ENCODE measurements at regions of chr1 and their contacts with region 1.

Region 1: DNA sequence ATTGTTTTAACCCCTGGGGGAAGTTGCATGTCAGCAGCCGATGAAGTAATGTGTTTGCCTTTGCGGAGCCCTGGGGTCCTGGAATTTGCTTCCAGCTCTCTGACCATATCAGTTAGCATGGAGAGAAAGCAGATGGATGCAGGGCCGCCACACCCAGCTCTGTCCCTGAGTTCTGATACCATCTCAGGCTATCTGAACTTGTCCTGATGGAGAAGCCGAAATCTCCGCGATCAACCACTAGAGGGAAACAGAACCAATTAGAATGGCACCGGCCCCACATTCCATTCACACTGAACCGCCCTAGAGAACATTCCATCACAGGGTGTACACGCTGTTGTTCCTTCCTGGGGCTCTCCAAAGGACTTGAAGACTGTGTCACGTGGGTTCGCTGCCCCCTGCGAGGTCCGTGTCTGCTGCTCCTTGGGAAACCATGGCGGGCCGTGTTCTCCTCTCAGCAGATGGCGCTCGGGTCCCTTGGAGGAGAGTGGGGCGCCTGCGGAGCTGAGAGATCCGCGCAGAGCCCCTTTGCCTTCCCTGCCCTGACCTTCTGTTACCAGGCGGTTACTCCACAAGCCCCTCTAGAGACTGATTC is 75.4 kb downstream of the ABCA4 start:
- DNase-seq: peak; percentile 93 to 96
- ATAC-seq: peak; percentile 98 to 99
- H3K4me3 ChIP-seq: no peak overlapping the region
- H3K27ac ChIP-seq: peak overlapping the region; percentile 49 to 83
- H3K4me1 ChIP-seq: peaks cover 17% of the 10 kb centered on the region
- CTCF ChIP-seq: peak; percentile 92
- EP300 ChIP-seq: no peak
- POLR2A ChIP-seq: no peak
- RAD21 ChIP-seq: peak; percentile 81 to 95

Region 2: GRCh38 chr1:93672069-93672468 is 373.5 kb before region 1 on chr1:
- CTCF ChIA-PET with region 1: no interaction called
- POLR2A ChIA-PET with region 1: no interaction called
- DNase-seq: peak; percentile 24 to 83
- ATAC-seq: peak; percentile 48 to 72; a peak in 4 of 6 replicates
- H3K4me3 ChIP-seq: no peak overlapping the region; the same call in 1 of the 3 replicates
- H3K27ac ChIP-seq: peak overlapping the region; percentile 74 to 86
- H3K4me1 ChIP-seq: peaks cover 100% of the 10 kb centered on the region
- CTCF ChIP-seq: no peak
- EP300 ChIP-seq: peak in 1 of 2 experiments; percentile 50; a peak in 2 of 5 replicates
- POLR2A ChIP-seq: no peak
- RAD21 ChIP-seq: no peak

Region 3: DNA sequence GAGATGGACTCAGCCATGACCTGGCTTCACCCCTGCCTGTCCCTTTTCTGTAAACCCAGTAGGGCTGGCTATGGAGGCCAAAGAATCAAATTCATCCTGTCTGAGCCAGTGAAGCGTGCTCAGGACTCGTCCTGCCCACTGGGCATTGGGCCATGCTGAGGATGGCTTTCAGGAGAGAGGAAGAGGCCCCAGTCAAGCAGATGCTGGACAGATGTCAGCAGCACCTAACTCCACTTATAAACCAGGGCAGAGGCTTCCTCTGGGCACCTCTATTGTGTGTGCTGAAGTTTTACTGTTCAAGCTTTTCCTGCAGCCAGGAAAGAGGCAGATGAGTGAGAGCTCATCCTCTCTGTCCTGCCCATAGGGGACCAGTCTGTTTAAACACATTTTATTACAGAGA is 39.0 kb before region 1 on chr1:
- CTCF ChIA-PET with region 1: no interaction called
- POLR2A ChIA-PET with region 1: no interaction called
- DNase-seq: no peak
- ATAC-seq: no peak
- H3K4me3 ChIP-seq: no peak overlapping the region
- H3K27ac ChIP-seq: no peak overlapping the region
- H3K4me1 ChIP-seq: 0 out of 3 replicates have a peak, but pooled peaks cover 3% of the 10 kb centered on the region
- CTCF ChIP-seq: no peak
- EP300 ChIP-seq: no peak
- POLR2A ChIP-seq: no peak
- RAD21 ChIP-seq: no peak

Region 4: DNA sequence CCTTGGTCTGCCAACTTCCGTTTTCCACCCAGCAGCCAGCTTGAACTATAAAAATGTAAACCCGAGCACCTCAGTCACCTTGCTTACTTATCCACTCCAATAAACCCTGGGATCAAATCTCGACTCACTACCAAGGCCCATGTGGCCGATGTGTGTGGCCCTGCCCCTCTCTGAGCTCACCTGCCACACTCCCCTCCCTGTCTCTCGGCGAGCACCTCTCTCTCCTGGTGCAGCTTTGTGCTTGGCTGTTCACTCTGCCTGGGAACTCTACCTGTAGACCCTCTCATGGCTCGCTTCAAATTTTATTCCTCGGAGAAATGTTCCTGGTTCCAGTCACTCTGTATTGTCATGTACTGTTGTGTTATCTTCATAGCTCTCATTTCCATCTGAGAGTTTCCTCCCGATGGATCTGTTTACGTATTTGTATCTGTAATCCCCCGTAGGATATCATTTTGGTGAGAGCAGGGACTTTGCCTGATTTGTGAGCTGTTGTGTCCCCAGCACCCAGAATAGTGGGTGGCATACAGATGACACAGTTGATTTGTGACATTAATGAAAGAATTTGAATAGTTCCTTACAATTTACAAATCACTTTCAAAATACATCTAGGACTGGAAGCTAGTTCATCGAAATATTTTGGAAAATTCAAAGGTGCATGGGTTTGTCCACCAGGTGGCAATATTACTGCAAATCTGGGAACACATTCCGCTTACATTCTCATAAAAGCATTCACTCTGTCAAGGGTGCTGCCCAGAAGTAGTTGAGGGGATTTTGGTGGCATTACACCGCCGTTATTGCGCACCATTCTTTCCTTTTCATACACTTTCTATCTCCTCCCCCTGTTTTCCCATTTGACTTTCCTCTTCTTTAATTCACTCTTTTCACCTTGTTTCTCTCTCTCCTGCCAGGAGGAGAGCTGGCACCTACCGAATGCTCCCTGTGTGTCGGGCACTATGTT is 19.9 kb before region 1 on chr1:
- CTCF ChIA-PET with region 1: interaction called, 315 read pairs
- POLR2A ChIA-PET with region 1: no interaction called
- DNase-seq: peak; percentile 60 to 68
- ATAC-seq: peak; percentile 55 to 70; a peak in 3 of 6 replicates
- H3K4me3 ChIP-seq: no peak overlapping the region
- H3K27ac ChIP-seq: peak overlapping the region; percentile 46 to 64; a peak in 5 of 6 replicates
- H3K4me1 ChIP-seq: peaks cover 37% of the 10 kb centered on the region
- CTCF ChIP-seq: peak; percentile 77
- EP300 ChIP-seq: no peak
- POLR2A ChIP-seq: no peak
- RAD21 ChIP-seq: peak; percentile 68 to 78

Region 5: GRCh38 chr1:94055459-94056122 is 10.0 kb after region 1 on chr1:
- CTCF ChIA-PET with region 1: interaction called, 89 read pairs
- POLR2A ChIA-PET with region 1: interaction called, 3 read pairs
- DNase-seq: no peak
- ATAC-seq: no peak
- H3K4me3 ChIP-seq: no peak overlapping the region
- H3K27ac ChIP-seq: no peak overlapping the region
- H3K4me1 ChIP-seq: peaks cover 10% of the 10 kb centered on the region
- CTCF ChIP-seq: no peak
- EP300 ChIP-seq: no peak
- POLR2A ChIP-seq: no peak
- RAD21 ChIP-seq: no peak

Region 6: GRCh38 chr1:94061513-94062443 is 16.2 kb after region 1 on chr1:
- CTCF ChIA-PET with region 1: interaction called, 89 read pairs
- POLR2A ChIA-PET with region 1: interaction called, 3 read pairs
- DNase-seq: peak; percentile 67 to 87
- ATAC-seq: peak; percentile 93 to 97
- H3K4me3 ChIP-seq: no peak overlapping the region
- H3K27ac ChIP-seq: peak overlapping the region; percentile 72 to 78
- H3K4me1 ChIP-seq: peaks cover 21% of the 10 kb centered on the region
- CTCF ChIP-seq: peak; percentile 76
- EP300 ChIP-seq: no peak
- POLR2A ChIP-seq: no peak
- RAD21 ChIP-seq: peak; percentile 91 to 93

Region 7: GRCh38 chr1:94209425-94209824 is 163.9 kb after region 1 on chr1:
- CTCF ChIA-PET with region 1: interaction called, 10 read pairs
- POLR2A ChIA-PET with region 1: no interaction called
- DNase-seq: no peak
- ATAC-seq: no peak
- H3K4me3 ChIP-seq: no peak overlapping the region
- H3K27ac ChIP-seq: no peak overlapping the region
- H3K4me1 ChIP-seq: no peaks in the 10 kb centered on the region
- CTCF ChIP-seq: no peak
- EP300 ChIP-seq: no peak
- POLR2A ChIP-seq: no peak
- RAD21 ChIP-seq: no peak

Region 8: GRCh38 chr1:94329986-94330385 is 284.4 kb after region 1 on chr1:
- CTCF ChIA-PET with region 1: interaction called, 840 read pairs
- POLR2A ChIA-PET with region 1: interaction called, 3 read pairs
- DNase-seq: peak in 1 of 2 experiments; percentile 37
- ATAC-seq: peak; percentile 22 to 48; a peak in 3 of 6 replicates
- H3K4me3 ChIP-seq: no peak overlapping the region
- H3K27ac ChIP-seq: peak overlapping the region; percentile 39 to 68; a peak in 5 of 6 replicates
- H3K4me1 ChIP-seq: peaks cover 54% of the 10 kb centered on the region
- CTCF ChIP-seq: peak; percentile 43
- EP300 ChIP-seq: no peak
- POLR2A ChIP-seq: no peak
- RAD21 ChIP-seq: peak; percentile 70 to 73

Region 9: DNA sequence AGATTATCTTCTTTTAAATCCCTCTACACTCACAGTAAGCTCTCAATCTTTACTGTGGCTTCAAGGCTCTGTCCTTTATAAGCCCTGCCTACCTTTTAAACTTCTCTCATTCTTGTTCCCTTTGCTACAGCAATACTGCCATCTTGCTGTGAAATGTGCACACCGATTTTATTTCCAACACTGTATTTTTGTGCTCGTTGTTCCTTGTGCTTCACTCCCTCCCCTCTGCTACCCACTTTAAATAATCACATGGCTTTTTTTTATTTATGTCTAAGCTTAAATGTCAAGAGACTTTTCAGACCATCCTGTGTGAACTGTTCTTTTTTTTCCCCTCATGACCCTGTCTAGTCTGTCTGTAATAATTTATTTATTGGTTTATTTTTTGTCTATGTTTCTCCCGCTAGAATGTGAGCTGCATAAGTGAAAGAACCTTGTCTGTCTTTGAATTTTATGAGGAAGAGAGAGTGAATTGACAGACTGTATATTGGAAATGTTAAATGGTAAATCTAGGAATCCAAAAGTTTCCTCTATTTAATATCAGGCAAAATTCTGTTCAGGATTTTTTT is 418.3 kb after region 1 on chr1:
- CTCF ChIA-PET with region 1: interaction called, 51 read pairs
- POLR2A ChIA-PET with region 1: no interaction called
- DNase-seq: peak; percentile 14 to 66
- ATAC-seq: peak; percentile 89 to 92
- H3K4me3 ChIP-seq: no peak overlapping the region
- H3K27ac ChIP-seq: peak overlapping the region in 1 of 2 experiments; percentile 40; a peak in 1 of 6 replicates
- H3K4me1 ChIP-seq: peaks cover 10% of the 10 kb centered on the region
- CTCF ChIP-seq: peak; percentile 81
- EP300 ChIP-seq: no peak
- POLR2A ChIP-seq: no peak
- RAD21 ChIP-seq: peak; percentile 86 to 92